AG04449 (cell line): ENCODE measurements at regions of chr4 and their contacts with region 1.

Region 1: DNA sequence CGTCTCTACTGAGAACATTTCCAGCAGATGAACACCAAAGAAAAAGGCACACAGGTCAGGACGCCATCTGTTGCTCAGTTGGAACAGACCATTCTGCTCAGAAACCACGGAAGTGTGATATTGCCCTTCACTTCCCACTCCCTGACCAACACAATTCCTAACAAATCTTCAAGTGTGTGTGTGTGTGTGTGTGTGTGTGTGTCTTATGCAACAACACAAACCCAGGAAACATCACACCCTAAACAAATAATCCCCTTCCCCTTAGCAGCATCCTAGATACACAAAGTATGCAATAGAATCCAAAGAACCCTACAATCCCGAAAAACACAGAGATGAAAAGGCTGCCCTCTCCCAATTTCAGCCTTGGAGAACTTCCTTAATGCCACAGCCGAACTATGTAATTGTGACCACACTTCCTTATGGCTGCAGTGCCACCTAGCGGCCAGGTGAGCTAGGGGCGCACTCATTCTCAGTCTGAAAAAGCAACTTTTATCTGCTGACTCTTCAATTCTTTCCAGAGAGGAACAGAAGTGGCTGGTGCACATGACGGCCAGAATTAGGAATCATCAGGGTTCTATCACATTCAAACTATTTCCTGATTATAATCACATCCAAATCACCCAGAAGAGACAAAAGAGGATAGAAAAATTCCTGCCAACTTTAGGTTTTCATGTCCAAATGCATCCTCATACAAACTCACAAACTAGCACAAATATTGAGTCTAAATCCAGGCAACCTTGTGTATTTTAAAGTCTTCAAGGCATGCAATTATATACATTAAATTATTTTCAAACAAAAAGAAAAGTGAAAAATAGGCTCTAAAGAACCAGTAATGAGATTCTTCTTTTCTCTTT is 164.9 kb downstream of the DHX15 start:
- DNase-seq: no peak
- H3K4me3 ChIP-seq: no peak overlapping the region
- CTCF ChIP-seq: peak; percentile 86

Region 2: DNA sequence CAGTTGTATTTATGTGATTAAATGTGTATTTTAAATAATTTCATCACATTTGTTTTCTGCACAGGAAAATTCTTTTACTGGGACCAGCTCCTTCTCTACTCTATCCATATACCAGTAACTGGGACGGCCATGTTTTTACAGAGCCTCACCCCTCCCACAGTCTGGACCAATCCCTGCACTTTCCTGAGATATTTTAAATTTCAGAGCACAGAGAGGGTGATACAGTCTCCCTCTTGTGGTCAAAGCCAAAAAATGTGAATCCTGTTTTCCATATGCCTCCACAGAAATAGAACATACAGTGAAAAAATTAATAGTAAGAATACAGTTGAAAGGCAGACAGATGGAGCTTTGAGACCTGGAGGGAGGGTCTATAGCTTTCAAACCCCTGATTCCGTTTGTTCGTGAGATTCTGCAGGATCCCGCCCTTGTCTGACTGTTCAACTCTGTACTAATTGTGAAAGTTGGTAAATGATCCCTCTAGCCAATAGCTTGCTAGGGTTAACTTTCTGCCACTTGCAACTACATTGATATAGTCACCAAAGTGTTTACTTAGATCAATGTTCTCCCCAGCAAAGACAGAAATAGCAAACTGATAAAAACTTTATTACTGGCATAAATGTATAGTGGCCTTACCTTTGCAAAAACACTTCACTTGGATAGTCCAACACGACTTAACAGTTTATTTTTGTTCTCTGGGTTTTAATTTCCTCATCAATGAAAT is 701.7 kb before region 1 on chr4:
- CTCF ChIA-PET with region 1: interaction called, 15 read pairs
- POLR2A ChIA-PET with region 1: no interaction called
- DNase-seq: no peak
- H3K4me3 ChIP-seq: no peak overlapping the region
- CTCF ChIP-seq: peak; percentile 26

Region 3: DNA sequence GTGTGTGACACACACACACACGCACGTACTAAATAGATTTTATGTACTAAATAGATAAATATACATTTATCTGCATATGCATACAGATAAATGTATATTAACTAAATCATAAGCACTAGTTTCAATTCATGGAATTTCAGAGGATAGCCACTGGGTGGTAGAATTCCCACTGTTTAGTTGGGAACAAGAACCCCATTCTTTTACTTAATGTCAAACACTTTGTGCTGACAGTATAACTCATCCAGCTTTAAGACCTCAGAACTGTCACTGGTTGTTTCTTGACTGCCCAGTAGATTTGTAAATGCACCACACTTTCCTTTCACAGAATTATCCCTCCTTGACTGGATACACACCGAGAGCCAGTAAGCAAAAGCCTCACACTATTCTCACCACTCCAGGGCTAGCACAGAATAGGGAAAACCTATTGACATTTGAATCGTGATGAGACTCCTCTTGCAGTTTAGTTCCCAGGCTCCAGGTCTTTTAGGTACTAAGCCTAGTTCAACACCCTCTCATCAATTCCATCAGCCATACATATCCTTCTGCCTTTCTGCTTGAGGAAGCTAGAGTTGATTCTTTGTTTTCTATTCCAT is 561.9 kb before region 1 on chr4:
- CTCF ChIA-PET with region 1: interaction called, 24 read pairs
- POLR2A ChIA-PET with region 1: no interaction called
- DNase-seq: no peak
- H3K4me3 ChIP-seq: no peak overlapping the region
- CTCF ChIP-seq: peak; percentile 13

Region 4: GRCh38 chr4:23932901-23933308 is 486.5 kb before region 1 on chr4:
- CTCF ChIA-PET with region 1: interaction called, 10 read pairs
- POLR2A ChIA-PET with region 1: no interaction called
- DNase-seq: no peak
- H3K4me3 ChIP-seq: no peak overlapping the region
- CTCF ChIP-seq: no peak

Region 5: DNA sequence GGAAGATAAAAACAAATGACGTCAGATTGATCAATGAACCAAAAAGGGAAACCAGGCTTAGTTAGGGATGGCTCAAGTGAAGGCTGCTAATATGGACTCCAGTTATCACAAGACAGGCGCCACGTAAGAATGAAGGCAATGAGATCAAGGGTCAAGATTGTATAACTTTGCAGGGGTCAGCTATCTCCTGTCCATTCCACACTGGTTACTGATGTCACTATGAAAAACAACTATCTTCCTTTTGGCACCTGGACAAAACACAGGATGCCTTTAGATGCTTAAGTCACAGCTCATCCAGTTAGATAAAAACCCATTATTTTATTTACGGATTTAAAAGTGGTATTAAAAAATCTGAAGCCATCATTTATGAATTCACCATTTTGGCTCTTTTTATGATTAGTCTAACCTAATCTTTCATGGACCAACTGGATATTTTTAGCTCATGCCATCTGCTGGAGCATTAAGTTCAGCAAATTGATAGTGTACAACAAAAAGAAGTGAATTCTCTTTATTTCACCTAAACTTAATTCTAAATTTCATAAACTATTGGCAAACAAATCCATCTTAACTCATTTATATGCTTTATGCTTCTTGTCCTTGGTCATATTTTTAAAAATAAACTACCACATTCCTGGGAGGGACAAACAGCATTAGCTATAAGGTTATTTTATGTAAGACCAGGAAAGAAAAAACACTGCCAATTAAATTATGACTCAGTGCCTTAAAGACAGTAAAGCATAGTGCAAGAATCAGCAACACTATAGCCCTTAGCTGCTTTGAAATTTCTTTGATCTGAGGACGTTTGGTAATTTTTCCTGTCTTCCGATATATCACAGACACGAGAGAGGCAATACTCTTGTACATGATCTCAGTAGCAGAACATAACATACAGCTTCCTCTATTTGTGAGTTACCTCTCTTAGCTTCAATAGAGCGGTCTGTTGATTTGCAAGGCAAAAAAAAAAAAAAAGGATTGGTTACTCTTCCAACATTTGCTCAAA is 137.9 kb after region 1 on chr4:
- CTCF ChIA-PET with region 1: no interaction called
- POLR2A ChIA-PET with region 1: no interaction called
- DNase-seq: no peak
- H3K4me3 ChIP-seq: no peak overlapping the region
- CTCF ChIP-seq: no peak